Activated B cell treated with CpG ODN at 0.5 μM for 24 hours (primary cell): ENCODE measurements at regions of chr17 and their contacts with region 1.

Region 1: GRCh38 chr17:60036796-60037612 is 41.7 kb downstream of the HEATR6 start:
- DNase-seq: peak; percentile 56
- ATAC-seq: peak; percentile 94
- H3K4me3 Mint-ChIP-seq: no peak overlapping the region
- H3K27ac Mint-ChIP-seq: no peak overlapping the region
- H3K4me1 Mint-ChIP-seq: peaks cover 4% of the 10 kb centered on the region
- H3K27me3 Mint-ChIP-seq: peaks cover 11% of the 10 kb centered on the region
- CTCF ChIP-seq: no peak

Region 2: GRCh38 chr17:59311130-59311920 is 725.7 kb before region 1 on chr17:
- CTCF ChIA-PET with region 1: no interaction called
- POLR2A ChIA-PET with region 1: no interaction called
- intact Hi-C with region 1: loop called (anchors 2 kb)
- DNase-seq: no peak
- ATAC-seq: peak; percentile 99
- H3K4me3 Mint-ChIP-seq: no peak overlapping the region
- H3K27ac Mint-ChIP-seq: no peak overlapping the region
- H3K4me1 Mint-ChIP-seq: no peaks in the 10 kb centered on the region
- H3K27me3 Mint-ChIP-seq: no peaks in the 10 kb centered on the region
- CTCF ChIP-seq: peak; percentile 86

Region 3: GRCh38 chr17:59859444-59860025 is 177.5 kb before region 1 on chr17:
- CTCF ChIA-PET with region 1: no interaction called
- POLR2A ChIA-PET with region 1: no interaction called
- intact Hi-C with region 1: no loop called
- DNase-seq: no peak
- ATAC-seq: peak; percentile 71
- H3K4me3 Mint-ChIP-seq: no peak overlapping the region
- H3K27ac Mint-ChIP-seq: peak overlapping the region; percentile 56
- H3K4me1 Mint-ChIP-seq: peaks cover 7% of the 10 kb centered on the region
- H3K27me3 Mint-ChIP-seq: no peaks in the 10 kb centered on the region
- CTCF ChIP-seq: peak; percentile 36

Region 4: DNA sequence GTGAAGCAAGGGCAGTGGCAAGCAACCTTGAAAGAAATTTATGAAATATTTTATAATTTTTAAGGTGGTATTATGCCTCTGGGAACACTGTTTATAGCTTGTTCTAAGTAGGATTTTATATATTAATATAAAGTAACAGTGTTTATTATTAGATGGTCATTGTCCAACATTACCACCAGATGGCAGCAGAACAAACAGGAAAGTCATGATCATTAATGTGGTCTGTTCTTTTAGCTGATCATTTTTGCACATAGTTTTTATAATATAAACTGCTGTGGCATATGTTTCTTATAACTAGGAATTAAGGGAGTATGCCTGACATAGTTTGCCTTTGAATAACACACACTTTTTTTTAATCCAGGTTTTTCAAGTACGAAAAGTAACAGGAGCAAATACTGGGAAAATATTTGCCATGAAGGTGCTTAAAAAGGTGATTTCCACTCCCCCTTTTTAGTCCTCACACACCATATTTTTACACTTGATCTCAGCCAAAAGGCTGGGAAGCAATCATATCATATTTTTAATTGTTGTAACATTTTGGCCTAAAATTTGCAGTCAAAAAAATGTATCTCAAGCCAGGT is 122.6 kb before region 1 on chr17:
- CTCF ChIA-PET with region 1: interaction called, 22 read pairs
- POLR2A ChIA-PET with region 1: no interaction called
- intact Hi-C with region 1: loop called (anchors 5 kb)
- DNase-seq: no peak
- ATAC-seq: peak; percentile 57
- H3K4me3 Mint-ChIP-seq: no peak overlapping the region
- H3K27ac Mint-ChIP-seq: no peak overlapping the region
- H3K4me1 Mint-ChIP-seq: no peaks in the 10 kb centered on the region
- H3K27me3 Mint-ChIP-seq: no peaks in the 10 kb centered on the region
- CTCF ChIP-seq: peak; percentile 84

Region 5: GRCh38 chr17:59954856-59955255 is 82.1 kb before region 1 on chr17:
- CTCF ChIA-PET with region 1: no interaction called
- POLR2A ChIA-PET with region 1: no interaction called
- intact Hi-C with region 1: no loop called
- DNase-seq: no peak
- ATAC-seq: no peak
- H3K4me3 Mint-ChIP-seq: no peak overlapping the region
- H3K27ac Mint-ChIP-seq: no peak overlapping the region
- H3K4me1 Mint-ChIP-seq: no peaks in the 10 kb centered on the region
- H3K27me3 Mint-ChIP-seq: no peaks in the 10 kb centered on the region
- CTCF ChIP-seq: no peak

Region 6: GRCh38 chr17:60065136-60065535 is 28.1 kb after region 1 on chr17:
- CTCF ChIA-PET with region 1: no interaction called
- POLR2A ChIA-PET with region 1: no interaction called
- intact Hi-C with region 1: no loop called
- DNase-seq: no peak
- ATAC-seq: no peak
- H3K4me3 Mint-ChIP-seq: no peak overlapping the region
- H3K27ac Mint-ChIP-seq: no peak overlapping the region
- H3K4me1 Mint-ChIP-seq: no peaks in the 10 kb centered on the region
- H3K27me3 Mint-ChIP-seq: no peaks in the 10 kb centered on the region
- CTCF ChIP-seq: no peak

Region 7: DNA sequence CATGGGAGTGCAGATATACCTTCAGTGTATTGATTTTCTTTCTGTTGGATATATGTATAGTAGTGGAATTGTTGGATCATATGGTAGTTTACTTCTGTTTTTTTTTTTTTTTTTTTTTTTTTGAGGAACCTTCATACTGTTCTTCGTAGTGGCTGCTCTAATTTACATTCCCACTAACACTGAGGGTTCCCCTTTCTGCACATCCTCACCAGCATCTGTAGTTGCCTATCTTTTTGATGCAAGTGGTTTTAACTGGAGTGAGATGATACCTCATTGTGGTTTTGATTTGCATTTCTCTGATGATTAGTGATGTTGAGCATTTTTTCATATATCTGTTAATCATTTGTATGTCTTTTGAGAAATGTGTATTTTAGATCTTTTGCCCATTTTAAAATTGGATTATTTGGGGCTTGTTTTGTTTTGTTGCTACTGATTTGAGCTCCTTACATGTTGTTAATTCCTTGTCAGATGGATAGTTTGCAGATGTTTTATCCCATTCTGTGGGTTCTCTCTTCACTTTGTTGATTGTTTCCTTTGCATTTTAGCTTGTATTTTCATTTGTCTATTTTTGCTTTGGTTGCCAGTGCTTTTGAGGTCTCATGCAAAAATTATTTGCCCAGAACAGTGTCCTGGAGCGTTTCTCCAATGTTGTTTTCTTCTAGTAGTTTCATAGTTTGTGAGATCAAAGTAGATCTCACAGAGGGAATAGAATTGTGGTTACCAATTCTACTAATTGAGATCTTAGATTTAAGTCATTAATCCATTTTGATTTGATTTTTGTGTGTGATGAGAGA is 615.6 kb after region 1 on chr17:
- CTCF ChIA-PET with region 1: no interaction called
- POLR2A ChIA-PET with region 1: no interaction called
- intact Hi-C with region 1: no loop called
- DNase-seq: no peak
- ATAC-seq: peak; percentile 100
- H3K4me3 Mint-ChIP-seq: peak overlapping the region; percentile 41
- H3K27ac Mint-ChIP-seq: peak overlapping the region; percentile 15
- H3K4me1 Mint-ChIP-seq: peaks cover 25% of the 10 kb centered on the region
- H3K27me3 Mint-ChIP-seq: no peaks in the 10 kb centered on the region
- CTCF ChIP-seq: no peak